Body of pancreas (tissue), 4 donors: ENCODE measurements at regions of chr9 and their contacts with region 1.

Region 1: GRCh38 chr9:68669218-68669617 is 35.8 kb upstream of the PIP5K1B start:
- DNase-seq: no peak
- ATAC-seq: no peak
- H3K4me3 ChIP-seq: no peak overlapping the region
- H3K27ac ChIP-seq: no peak overlapping the region
- H3K4me1 ChIP-seq: no peaks in the 10 kb centered on the region
- H3K27me3 ChIP-seq: no peaks in the 10 kb centered on the region
- CTCF ChIP-seq: no peak
- POLR2A ChIP-seq: no peak

Region 2: GRCh38 chr9:68739621-68740174 is 70.5 kb after region 1 on chr9:
- intact Hi-C with region 1: loop called (anchors 10 kb)
- DNase-seq: peak; percentile 16 to 50 (median 27)
- ATAC-seq: peak; percentile 75
- H3K4me3 ChIP-seq: no peak overlapping the region
- H3K27ac ChIP-seq: peak overlapping the region in 2 of 4 donors; percentile 48 to 64
- H3K4me1 ChIP-seq: peaks cover 18% of the 10 kb centered on the region
- H3K27me3 ChIP-seq: no peaks in the 10 kb centered on the region
- CTCF ChIP-seq: no peak
- POLR2A ChIP-seq: no peak